ENCODE measurements at regions of chr10 and their contacts with region 1.

Region 1: DNA sequence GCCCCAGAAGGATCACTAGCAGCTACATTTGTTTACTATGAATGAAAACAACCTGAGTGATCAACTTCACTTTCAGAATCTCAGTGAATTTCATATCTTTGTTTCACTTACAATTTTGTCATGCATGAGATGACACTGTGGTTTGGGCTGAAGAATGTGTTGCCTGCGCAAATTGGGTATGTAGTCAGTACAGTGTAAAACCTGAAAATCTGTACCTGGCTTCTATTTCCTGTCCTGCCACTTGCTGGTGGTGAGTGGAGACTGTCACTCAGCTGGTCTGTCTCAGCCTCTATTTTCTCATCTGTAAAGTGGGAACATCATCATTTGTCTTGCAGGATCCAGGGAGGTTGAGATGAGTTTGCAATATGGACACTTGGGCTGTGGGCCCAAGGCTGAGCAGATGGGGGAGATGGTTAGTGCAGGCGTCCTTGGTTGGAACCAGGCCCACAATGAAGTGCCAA is 118.0 kb downstream of the WDFY4 start:
- DNase-seq: peak; percentile 30
- ATAC-seq: peak; percentile 68
- H3K4me3 Mint-ChIP-seq: no peak overlapping the region
- H3K27ac Mint-ChIP-seq: no peak overlapping the region
- H3K4me1 Mint-ChIP-seq: peaks cover 51% of the 10 kb centered on the region
- H3K27me3 Mint-ChIP-seq: no peaks in the 10 kb centered on the region

Region 2: GRCh38 chr10:48773580-48773979 is 29.1 kb before region 1 on chr10:
- CTCF ChIA-PET with region 1: no interaction called
- POLR2A ChIA-PET with region 1: no interaction called
- intact Hi-C with region 1: no loop called
- DNase-seq: no peak
- ATAC-seq: no peak
- H3K4me3 Mint-ChIP-seq: no peak overlapping the region
- H3K27ac Mint-ChIP-seq: no peak overlapping the region
- H3K4me1 Mint-ChIP-seq: no peaks in the 10 kb centered on the region
- H3K27me3 Mint-ChIP-seq: no peaks in the 10 kb centered on the region

Region 3: DNA sequence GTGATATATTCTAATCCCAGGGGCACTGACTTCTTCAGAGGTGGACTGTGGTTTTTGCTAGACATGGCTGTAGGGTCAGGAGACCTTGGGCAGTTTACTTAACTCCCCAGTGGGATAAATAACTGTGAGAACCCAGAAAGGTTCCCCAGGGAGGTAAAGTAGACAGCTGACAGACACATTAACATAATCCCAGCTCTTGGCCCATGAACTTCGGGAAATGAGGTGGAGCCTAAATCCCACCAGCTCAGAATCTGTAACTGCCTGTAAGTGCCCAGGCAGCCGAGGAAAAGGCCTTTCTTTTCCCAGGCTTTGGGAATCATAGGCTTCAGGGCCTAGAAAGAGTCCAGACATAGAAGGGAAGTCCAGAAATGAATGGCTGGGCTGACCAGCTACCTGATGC is 31.0 kb after region 1 on chr10:
- CTCF ChIA-PET with region 1: no interaction called
- POLR2A ChIA-PET with region 1: no interaction called
- intact Hi-C with region 1: no loop called
- DNase-seq: no peak
- ATAC-seq: no peak
- H3K4me3 Mint-ChIP-seq: no peak overlapping the region
- H3K27ac Mint-ChIP-seq: no peak overlapping the region
- H3K4me1 Mint-ChIP-seq: no peaks in the 10 kb centered on the region
- H3K27me3 Mint-ChIP-seq: no peaks in the 10 kb centered on the region

Region 4: GRCh38 chr10:49187950-49188761 is 385.5 kb after region 1 on chr10 and contains the start of gene TMEM273:
- CTCF ChIA-PET with region 1: no interaction called
- POLR2A ChIA-PET with region 1: no interaction called
- intact Hi-C with region 1: loop called in 1 of 2 experiments (anchors 5 kb)
- DNase-seq: peak; percentile 48
- ATAC-seq: peak; percentile 59
- H3K4me3 Mint-ChIP-seq: peak within 1 kb of the TSS; percentile 57
- H3K27ac Mint-ChIP-seq: peak within 1 kb of the TSS; percentile 68
- H3K4me1 Mint-ChIP-seq: peaks cover 23% of the 10 kb centered on the region
- H3K27me3 Mint-ChIP-seq: peaks cover 23% of the 10 kb centered on the region
- total RNA-seq, gene TMEM273: 26.5 to 28.0 TPM

Measured in activated CD4-positive, alpha-beta T cell treated with anti-CD3 and anti-CD28 coated beads for 36 hours (primary cell).